Ovary (tissue), 10 donors: ENCODE measurements at regions of chr5 and their contacts with region 1.

Region 1: GRCh38 chr5:8192840-8193239 is 323.9 kb downstream of the MTRR start:
- DNase-seq: no peak
- H3K4me3 ChIP-seq: no peak overlapping the region
- H3K27ac ChIP-seq: no peak overlapping the region
- H3K4me1 ChIP-seq: no peaks in the 10 kb centered on the region
- H3K27me3 ChIP-seq: no peaks in the 10 kb centered on the region
- CTCF ChIP-seq: no peak
- EP300 ChIP-seq: no peak
- POLR2A ChIP-seq: no peak

Region 2: DNA sequence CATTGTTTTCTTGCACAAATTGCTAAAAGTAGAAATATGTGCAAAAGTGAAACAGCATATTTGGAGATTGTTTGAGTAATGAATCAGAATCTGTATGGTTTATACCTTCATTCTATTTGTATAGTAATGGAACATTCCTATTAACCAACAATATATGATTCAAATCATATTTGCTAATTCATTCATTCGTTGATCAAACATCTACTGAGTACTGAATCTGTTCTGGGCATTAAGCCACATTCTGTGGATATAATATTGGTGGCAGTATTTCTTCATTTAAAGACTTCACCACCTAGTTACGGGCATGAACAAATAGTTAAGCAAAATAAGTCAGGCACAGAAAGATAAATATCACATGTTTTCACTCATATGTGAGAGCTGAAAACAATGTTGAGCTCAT is 61.8 kb after region 1 on chr5:
- intact Hi-C with region 1: loop called in 1 of 4 experiments (anchors 2 kb)
- DNase-seq: no peak
- H3K4me3 ChIP-seq: no peak overlapping the region
- H3K27ac ChIP-seq: no peak overlapping the region
- H3K4me1 ChIP-seq: no peaks in the 10 kb centered on the region
- H3K27me3 ChIP-seq: no peaks in the 10 kb centered on the region
- CTCF ChIP-seq: no peak
- EP300 ChIP-seq: no peak
- POLR2A ChIP-seq: no peak